ENCODE measurements at regions of chr9 and their contacts with region 1.

Region 1: GRCh38 chr9:89497978-89498851 is at the start of gene SEMA4D:
- DNase-seq: peak; percentile 86
- ATAC-seq: peak; percentile 80
- total RNA-seq, gene SEMA4D: 24.1 TPM

Region 2: DNA sequence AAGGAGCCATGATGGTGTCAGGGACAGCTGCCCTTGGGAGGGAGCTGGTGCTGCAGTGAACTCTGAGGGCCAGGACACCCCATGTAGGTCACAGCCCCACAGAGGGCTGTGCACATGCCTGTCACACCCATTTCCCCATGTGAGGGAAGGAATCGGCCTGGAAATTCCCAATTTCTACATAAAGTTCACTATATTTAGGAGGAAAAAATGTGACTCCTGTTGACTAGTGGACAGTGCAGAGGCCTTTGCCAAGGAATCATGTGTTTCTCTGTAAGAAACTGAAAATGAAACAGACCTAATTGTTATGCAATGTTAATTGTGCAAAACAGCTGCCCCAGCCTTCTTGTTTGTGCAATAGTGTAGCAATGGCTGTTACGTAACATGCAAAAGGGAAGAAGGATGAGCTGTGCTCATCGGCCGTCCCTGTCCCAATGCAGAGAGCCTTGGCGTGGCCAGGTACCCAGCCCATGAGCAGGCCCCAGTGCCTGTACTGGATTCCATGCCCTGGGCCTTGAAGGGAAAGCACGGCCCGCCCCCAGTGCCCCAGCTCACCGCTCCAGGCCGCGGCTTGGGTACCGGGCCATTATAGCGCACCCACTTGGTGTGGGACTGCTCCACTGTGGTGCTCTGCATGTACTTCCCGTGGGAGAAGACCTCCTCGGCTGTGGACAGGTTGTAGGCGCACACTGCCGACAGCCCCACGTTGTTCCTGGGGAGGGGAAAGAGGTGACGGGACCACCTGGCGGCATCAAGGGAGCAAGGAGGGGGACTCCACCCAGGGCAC is 109.9 kb before region 1 on chr9:
- intact Hi-C with region 1: loop called (anchors 10 kb)
- DNase-seq: peak; percentile 84
- ATAC-seq: peak; percentile 77

Measured in Right ventricle myocardium inferior (tissue), 1 donor.